ENCODE measurements at regions of chr11 and their contacts with region 1.

Region 1: DNA sequence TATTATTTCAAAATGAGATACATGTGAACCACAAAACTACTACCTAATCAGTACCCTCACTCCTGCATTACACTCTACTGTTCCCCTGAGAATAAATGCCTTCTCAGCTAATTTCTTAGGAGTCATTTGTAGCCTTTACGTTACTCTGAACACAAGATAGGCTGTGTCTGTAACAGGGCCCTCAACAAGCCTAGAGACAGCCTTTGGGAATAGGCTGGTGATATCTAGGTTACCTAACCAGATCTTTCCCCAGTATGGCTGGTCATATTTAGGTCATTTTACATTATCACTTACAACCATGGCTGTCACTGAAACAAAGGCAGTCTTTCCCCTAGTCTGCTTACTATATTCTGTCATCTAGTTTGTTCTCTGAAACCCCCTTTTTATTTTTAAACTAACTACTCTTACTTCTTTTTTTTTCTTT is 14.2 kb downstream of the ATM start:
- DNase-seq: peak in 2 of 5 donors; percentile 48 to 53
- H3K4me3 ChIP-seq: peak overlapping the region; percentile 57
- H3K4me3 Mint-ChIP-seq: peak overlapping the region; percentile 28 to 79 (median 72)
- H3K27ac ChIP-seq: peak overlapping the region; percentile 53
- H3K27ac Mint-ChIP-seq: peak overlapping the region; percentile 78 to 98 (median 95)
- H3K4me1 ChIP-seq: peaks cover 95% of the 10 kb centered on the region
- H3K4me1 Mint-ChIP-seq: peaks cover 73 to 95% (median 91%) of the 10 kb centered on the region in 3 donors
- H3K27me3 ChIP-seq: no peaks in the 10 kb centered on the region
- H3K27me3 Mint-ChIP-seq: no peaks in the 10 kb centered on the region

Region 2: GRCh38 chr11:108177570-108177969 is 59.5 kb before region 1 on chr11:
- CTCF ChIA-PET with region 1: no interaction called
- POLR2A ChIA-PET with region 1: no interaction called
- DNase-seq: no peak
- H3K4me3 ChIP-seq: no peak overlapping the region
- H3K4me3 Mint-ChIP-seq: no peak overlapping the region
- H3K27ac ChIP-seq: no peak overlapping the region
- H3K27ac Mint-ChIP-seq: no peak overlapping the region
- H3K4me1 ChIP-seq: no peaks in the 10 kb centered on the region
- H3K4me1 Mint-ChIP-seq: peaks cover 4 to 24% (median 15%) of the 10 kb centered on the region in 3 donors
- H3K27me3 ChIP-seq: no peaks in the 10 kb centered on the region
- H3K27me3 Mint-ChIP-seq: no peaks in the 10 kb centered on the region

Region 3: DNA sequence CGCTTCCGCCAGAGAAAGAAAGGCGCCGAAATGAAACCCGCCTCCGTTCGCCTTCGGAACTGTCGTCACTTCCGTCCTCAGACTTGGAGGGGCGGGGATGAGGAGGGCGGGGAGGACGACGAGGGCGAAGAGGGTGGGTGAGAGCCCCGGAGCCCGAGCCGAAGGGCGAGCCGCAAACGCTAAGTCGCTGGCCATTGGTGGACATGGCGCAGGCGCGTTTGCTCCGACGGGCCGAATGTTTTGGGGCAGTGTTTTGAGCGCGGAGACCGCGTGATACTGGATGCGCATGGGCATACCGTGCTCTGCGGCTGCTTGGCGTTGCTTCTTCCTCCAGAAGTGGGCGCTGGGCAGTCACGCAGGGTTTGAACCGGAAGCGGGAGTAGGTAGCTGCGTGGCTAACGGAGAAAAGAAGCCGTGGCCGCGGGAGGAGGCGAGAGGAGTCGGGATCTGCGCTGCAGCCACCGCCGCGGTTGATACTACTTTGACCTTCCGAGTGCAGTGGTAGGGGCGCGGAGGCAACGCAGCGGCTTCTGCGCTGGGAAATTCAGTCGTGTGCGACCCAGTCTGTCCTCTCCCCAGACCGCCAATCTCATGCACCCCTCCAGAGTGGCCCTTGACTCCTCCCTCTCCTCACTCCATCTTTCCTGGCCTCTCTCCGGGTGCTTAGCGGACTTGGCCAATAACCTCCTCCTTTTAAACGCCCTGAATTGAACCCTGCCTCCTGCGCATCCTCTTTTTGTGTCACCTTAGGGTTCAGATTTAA is 14.2 kb before region 1 on chr11 and contains the start of gene ATM:
- CTCF ChIA-PET with region 1: interaction called, 160 read pairs
- POLR2A ChIA-PET with region 1: interaction called, 163 read pairs
- DNase-seq: peak; percentile 98 to 100 (median 99)
- H3K4me3 ChIP-seq: peak within 1 kb of the TSS; percentile 97
- H3K4me3 Mint-ChIP-seq: no peak within 1 kb of the TSS
- H3K27ac ChIP-seq: peak within 1 kb of the TSS; percentile 100
- H3K27ac Mint-ChIP-seq: no peak within 1 kb of the TSS
- H3K4me1 ChIP-seq: peaks cover 31% of the 10 kb centered on the region
- H3K4me1 Mint-ChIP-seq: peaks cover 48 to 66% (median 65%) of the 10 kb centered on the region in 3 donors
- H3K27me3 ChIP-seq: no peaks in the 10 kb centered on the region
- H3K27me3 Mint-ChIP-seq: no peaks in the 10 kb centered on the region
- total RNA-seq, gene ATM: 76.0 to 77.1 TPM

Region 4: GRCh38 chr11:108289699-108290098 is 52.6 kb after region 1 on chr11:
- CTCF ChIA-PET with region 1: no interaction called
- POLR2A ChIA-PET with region 1: no interaction called
- DNase-seq: no peak
- H3K4me3 ChIP-seq: no peak overlapping the region
- H3K4me3 Mint-ChIP-seq: no peak overlapping the region
- H3K27ac ChIP-seq: no peak overlapping the region
- H3K27ac Mint-ChIP-seq: peak overlapping the region in 3 of 8 donors; percentile 11 to 82 (median 33)
- H3K4me1 ChIP-seq: peaks cover 8% of the 10 kb centered on the region
- H3K4me1 Mint-ChIP-seq: peaks cover 19 to 23% (median 19%) of the 10 kb centered on the region in 3 donors
- H3K27me3 ChIP-seq: no peaks in the 10 kb centered on the region
- H3K27me3 Mint-ChIP-seq: no peaks in the 10 kb centered on the region